ENCODE measurements at regions of chr15 and their contacts with region 1.

Region 1: GRCh38 chr15:50066192-50066591 is 52.8 kb downstream of the ATP8B4 start:
- DNase-seq: peak in 1 of 9 donors; percentile 35
- ATAC-seq: peak; percentile 88
- H3K4me3 ChIP-seq: no peak overlapping the region
- H3K4me3 Mint-ChIP-seq: no peak overlapping the region
- H3K27ac ChIP-seq: no peak overlapping the region
- H3K27ac Mint-ChIP-seq: peak overlapping the region in 1 of 9 donors; percentile 78
- H3K4me1 ChIP-seq: no peaks in the 10 kb centered on the region
- H3K4me1 Mint-ChIP-seq: peaks cover 0 to 43% (median 0%) of the 10 kb centered on the region in 7 donors
- H3K27me3 ChIP-seq: no peaks in the 10 kb centered on the region
- H3K27me3 Mint-ChIP-seq: peaks cover 0 to 28% (median 0%) of the 10 kb centered on the region in 5 donors

Region 2: GRCh38 chr15:50046867-50047266 is 19.3 kb before region 1 on chr15:
- CTCF ChIA-PET with region 1: no interaction called
- POLR2A ChIA-PET with region 1: no interaction called
- intact Hi-C with region 1: loop called in 1 of 2 experiments (anchors 2 kb)
- DNase-seq: no peak
- ATAC-seq: no peak
- H3K4me3 ChIP-seq: no peak overlapping the region
- H3K4me3 Mint-ChIP-seq: no peak overlapping the region
- H3K27ac ChIP-seq: no peak overlapping the region
- H3K27ac Mint-ChIP-seq: peak overlapping the region in 1 of 9 donors; percentile 34
- H3K4me1 ChIP-seq: no peaks in the 10 kb centered on the region
- H3K4me1 Mint-ChIP-seq: peaks cover 0 to 19% (median 0%) of the 10 kb centered on the region in 7 donors
- H3K27me3 ChIP-seq: no peaks in the 10 kb centered on the region
- H3K27me3 Mint-ChIP-seq: peaks cover 0 to 24% (median 1%) of the 10 kb centered on the region in 5 donors

Region 3: GRCh38 chr15:50107591-50108408 is 41.6 kb after region 1 on chr15:
- CTCF ChIA-PET with region 1: no interaction called
- POLR2A ChIA-PET with region 1: no interaction called
- intact Hi-C with region 1: loop called in 1 of 2 experiments (anchors 1 kb)
- DNase-seq: peak in 1 of 9 donors; percentile 42
- ATAC-seq: peak; percentile 90
- H3K4me3 ChIP-seq: no peak overlapping the region
- H3K4me3 Mint-ChIP-seq: peak overlapping the region in 2 of 10 donors; percentile 33 to 80
- H3K27ac ChIP-seq: no peak overlapping the region
- H3K27ac Mint-ChIP-seq: peak overlapping the region in 2 of 9 donors; percentile 15 to 96
- H3K4me1 ChIP-seq: peaks cover 4 to 19% of the 10 kb centered on the region in 2 donors
- H3K4me1 Mint-ChIP-seq: peaks cover 21 to 73% (median 35%) of the 10 kb centered on the region in 7 donors
- H3K27me3 ChIP-seq: no peaks in the 10 kb centered on the region
- H3K27me3 Mint-ChIP-seq: peaks cover 0 to 22% (median 0%) of the 10 kb centered on the region in 5 donors

Region 4: DNA sequence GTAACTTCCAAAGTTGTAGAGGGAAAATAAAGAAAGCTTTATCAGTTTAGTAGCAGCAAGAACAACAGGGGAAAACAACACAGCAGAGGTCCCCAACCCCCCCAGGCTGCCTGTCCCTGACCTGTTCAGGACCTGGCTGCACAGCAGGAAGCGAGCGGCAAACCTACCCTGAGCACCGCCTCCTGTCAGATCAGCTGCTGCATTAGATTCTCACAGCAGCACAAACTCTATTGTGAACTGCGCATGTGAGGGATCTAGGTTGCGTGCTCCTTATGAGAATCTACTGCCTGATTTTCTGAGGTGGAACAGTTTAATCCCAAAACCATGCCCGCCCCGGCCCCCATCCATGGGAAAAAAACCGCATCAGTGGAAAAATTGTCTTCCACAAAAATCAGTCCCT is 439.9 kb after region 1 on chr15:
- CTCF ChIA-PET with region 1: no interaction called
- POLR2A ChIA-PET with region 1: no interaction called
- intact Hi-C with region 1: no loop called
- DNase-seq: no peak
- ATAC-seq: no peak
- H3K4me3 ChIP-seq: no peak overlapping the region
- H3K4me3 Mint-ChIP-seq: no peak overlapping the region
- H3K27ac ChIP-seq: no peak overlapping the region
- H3K27ac Mint-ChIP-seq: no peak overlapping the region
- H3K4me1 ChIP-seq: no peaks in the 10 kb centered on the region
- H3K4me1 Mint-ChIP-seq: peaks cover 0 to 11% (median 0%) of the 10 kb centered on the region in 7 donors
- H3K27me3 ChIP-seq: no peaks in the 10 kb centered on the region
- H3K27me3 Mint-ChIP-seq: no peaks in the 10 kb centered on the region

Measured in naive thymus-derived CD4-positive, alpha-beta T cell (primary cell).